ENCODE measurements at regions of chr3 and their contacts with region 1.

Region 1: GRCh38 chr3:49723628-49724551 is at the start of gene GMPPB:
- DNase-seq: peak; percentile 95 to 98 (median 96)
- H3K4me3 ChIP-seq: peak within 1 kb of the TSS; percentile 82 to 88 (median 82)
- H3K4me3 Mint-ChIP-seq: peak within 1 kb of the TSS; percentile 87 to 95
- H3K27ac ChIP-seq: peak within 1 kb of the TSS; percentile 77 to 97
- H3K27ac Mint-ChIP-seq: peak within 1 kb of the TSS; percentile 92 to 97 (median 96)
- H3K4me1 ChIP-seq: peaks cover 28 to 38% of the 10 kb centered on the region in 2 donors
- H3K4me1 Mint-ChIP-seq: peaks cover 30% of the 10 kb centered on the region
- H3K27me3 ChIP-seq: peaks cover 0 to 1% of the 10 kb centered on the region in 2 donors
- H3K27me3 Mint-ChIP-seq: peaks cover 0 to 4% (median 2%) of the 10 kb centered on the region in 3 donors
- CTCF ChIP-seq: no peak
- polyA plus RNA-seq, gene GMPPB: 14.7 to 17.6 (median 17.6) TPM

Region 2: GRCh38 chr3:49689046-49689907 is 34.6 kb before region 1 on chr3 and contains the starts of genes MST1 and RNF123:
- intact Hi-C with region 1: no loop called
- DNase-seq: peak; percentile 85 to 88 (median 88)
- H3K4me3 ChIP-seq: peak within 1 kb of the TSS; percentile 63 to 97 (median 76)
- H3K4me3 Mint-ChIP-seq: peak within 1 kb of the TSS; percentile 96 to 98
- H3K27ac ChIP-seq: peak within 1 kb of the TSS; percentile 21 to 85
- H3K27ac Mint-ChIP-seq: peak within 1 kb of the TSS; percentile 79 to 96 (median 85)
- H3K4me1 ChIP-seq: peaks cover 27 to 29% of the 10 kb centered on the region in 2 donors
- H3K4me1 Mint-ChIP-seq: peaks cover 38% of the 10 kb centered on the region
- H3K27me3 ChIP-seq: peaks cover 0 to 27% of the 10 kb centered on the region in 2 donors
- H3K27me3 Mint-ChIP-seq: peaks cover 23 to 33% (median 32%) of the 10 kb centered on the region in 3 donors
- CTCF ChIP-seq: peak; percentile 19
- polyA plus RNA-seq, gene MST1: 0.28 to 17.8 TPM in 2 of 3 donors, not detected in the other
- polyA plus RNA-seq, gene RNF123: 11.1 to 46.2 (median 15.7) TPM

Region 3: DNA sequence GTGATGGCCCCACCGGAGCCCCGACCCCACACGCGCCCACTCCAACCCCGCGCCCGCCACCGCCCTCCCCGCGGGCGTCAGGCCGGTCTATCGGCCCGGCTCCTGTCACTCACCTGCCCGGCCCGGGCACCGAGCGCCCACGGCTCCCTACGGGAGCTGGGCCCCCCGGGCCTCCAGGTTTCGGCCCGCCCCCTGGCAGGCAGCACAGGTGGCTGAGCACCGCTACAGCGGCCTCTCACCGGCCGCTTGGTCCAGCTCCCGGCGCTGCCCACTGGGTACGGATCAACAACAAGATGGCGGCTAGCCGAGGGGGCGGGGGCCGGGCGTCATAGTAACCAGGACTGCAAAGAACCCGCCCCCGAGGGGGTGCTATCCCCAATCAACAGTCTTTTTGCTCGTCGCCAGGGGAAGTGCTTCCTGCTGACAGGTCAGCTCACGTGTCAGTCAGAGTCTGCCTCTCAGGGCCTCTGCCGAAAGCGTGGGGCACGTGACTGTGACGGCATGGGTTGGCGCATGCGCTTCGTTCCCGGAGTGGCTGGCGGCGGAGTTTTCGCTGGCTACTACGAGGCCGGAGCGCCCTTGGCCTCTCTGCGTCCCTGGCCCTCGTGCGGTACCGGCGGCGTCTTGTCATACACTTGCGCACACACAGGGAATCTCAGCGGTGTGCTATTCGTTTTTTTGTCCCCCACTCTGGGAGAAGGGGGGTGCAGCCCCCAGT is 62.5 kb after region 1 on chr3 and contains the start of gene IP6K1:
- intact Hi-C with region 1: loop called (anchors 5 to 10 kb)
- DNase-seq: peak; percentile 100
- H3K4me3 ChIP-seq: peak within 1 kb of the TSS; percentile 87 to 94 (median 91)
- H3K4me3 Mint-ChIP-seq: peak within 1 kb of the TSS; percentile 88 to 97
- H3K27ac ChIP-seq: peak within 1 kb of the TSS; percentile 81 to 95
- H3K27ac Mint-ChIP-seq: peak within 1 kb of the TSS; percentile 94 to 98 (median 95)
- H3K4me1 ChIP-seq: peaks cover 18 to 21% of the 10 kb centered on the region in 2 donors
- H3K4me1 Mint-ChIP-seq: peaks cover 31% of the 10 kb centered on the region
- H3K27me3 ChIP-seq: no peaks in the 10 kb centered on the region
- H3K27me3 Mint-ChIP-seq: peaks cover 0 to 8% (median 4%) of the 10 kb centered on the region in 3 donors
- CTCF ChIP-seq: no peak
- polyA plus RNA-seq, gene IP6K1: 15.8 to 27.1 (median 16.1) TPM

Region 4: DNA sequence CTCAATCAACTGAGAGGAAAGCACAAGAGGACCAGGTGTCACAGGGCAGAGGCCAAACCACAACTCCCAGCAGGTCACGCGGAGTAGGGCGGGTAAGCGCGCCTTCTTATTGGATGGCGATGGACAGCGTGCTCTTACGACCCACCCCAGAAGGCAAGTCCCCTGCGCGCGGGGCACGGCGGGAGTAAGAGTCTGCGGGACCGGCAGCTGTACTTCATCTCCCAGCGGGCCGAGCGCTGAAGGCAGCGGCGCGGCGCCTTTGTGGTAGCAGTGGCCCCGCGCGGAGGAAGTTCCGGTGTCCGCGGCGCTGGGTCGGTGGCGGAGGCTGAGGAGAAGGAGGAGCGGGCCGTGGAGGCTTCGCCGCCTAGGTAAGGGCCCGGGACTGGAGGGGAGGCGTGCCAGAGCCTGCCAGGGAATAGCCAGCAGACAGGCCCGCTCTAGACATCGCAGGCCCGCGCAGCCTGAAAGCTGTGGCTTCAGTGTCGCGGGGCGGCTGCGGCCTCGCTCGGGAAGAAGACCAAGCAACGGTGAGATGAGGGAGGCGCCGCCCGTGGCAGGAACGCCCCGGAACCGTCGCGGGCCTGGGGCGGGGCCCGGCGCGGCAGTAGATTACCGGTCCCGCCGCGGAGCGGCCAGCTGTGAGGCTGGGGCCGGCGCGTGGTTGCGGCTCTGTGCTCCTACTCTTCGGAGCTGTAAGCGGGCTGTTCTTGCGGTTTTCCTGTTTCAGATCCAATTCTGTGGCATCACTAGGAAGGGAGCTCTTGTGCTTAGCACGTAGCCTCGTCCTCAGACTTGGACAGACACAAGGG is 216.2 kb after region 1 on chr3 and contains the start of gene RBM6:
- intact Hi-C with region 1: loop called in 1 of 2 experiments (anchors 10 kb)
- DNase-seq: peak; percentile 93 to 96 (median 94)
- H3K4me3 ChIP-seq: peak within 1 kb of the TSS; percentile 77 to 98 (median 92)
- H3K4me3 Mint-ChIP-seq: peak within 1 kb of the TSS; percentile 95
- H3K27ac ChIP-seq: peak within 1 kb of the TSS; percentile 89 to 98
- H3K27ac Mint-ChIP-seq: peak within 1 kb of the TSS; percentile 93 to 98 (median 96)
- H3K4me1 ChIP-seq: peaks cover 40 to 50% of the 10 kb centered on the region in 2 donors
- H3K4me1 Mint-ChIP-seq: peaks cover 46% of the 10 kb centered on the region
- H3K27me3 ChIP-seq: no peaks in the 10 kb centered on the region
- H3K27me3 Mint-ChIP-seq: peaks cover 0 to 2% (median 0%) of the 10 kb centered on the region in 3 donors
- CTCF ChIP-seq: no peak
- polyA plus RNA-seq, gene RBM6: 11.3 to 137 (median 17.8) TPM

Measured in CD14-positive monocyte (primary cell).